IMR-90 (cell line): ENCODE measurements at regions of chr2 and their contacts with region 1.

Region 1: DNA sequence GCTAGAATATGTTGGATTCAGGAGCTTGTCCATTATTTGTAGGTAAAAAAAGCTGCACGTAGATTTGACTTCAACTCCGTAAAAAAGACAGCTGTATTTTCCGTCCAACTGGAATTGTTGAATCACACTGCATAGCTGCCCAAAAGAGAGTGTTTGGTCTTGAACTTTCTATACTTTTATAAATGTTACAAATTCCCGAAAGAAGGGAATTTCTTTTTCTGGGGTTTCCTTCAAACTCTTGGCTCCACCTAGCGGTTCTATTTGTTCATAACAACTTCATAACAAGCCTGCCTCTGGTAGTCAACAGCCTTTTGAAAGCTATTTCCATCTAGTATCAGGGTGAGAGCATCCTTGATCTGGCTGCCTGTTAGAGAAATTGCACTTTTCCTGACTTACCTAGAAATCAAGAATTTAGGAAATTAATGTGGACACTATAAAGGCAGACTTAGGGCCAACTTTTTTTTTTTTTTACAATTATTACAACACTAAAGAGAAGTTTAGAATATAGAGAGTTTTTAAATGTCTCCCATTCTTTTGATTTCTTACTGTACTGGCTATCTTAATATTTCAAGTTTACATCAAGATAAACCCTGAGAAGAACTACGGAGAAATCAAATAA is 48.1 kb downstream of the TMEM185B start:
- DNase-seq: peak; percentile 79
- ATAC-seq: peak; percentile 87
- H3K4me3 ChIP-seq: no peak overlapping the region
- H3K27ac ChIP-seq: no peak overlapping the region
- H3K4me1 ChIP-seq: peaks cover 3% of the 10 kb centered on the region
- H3K27me3 ChIP-seq: no peaks in the 10 kb centered on the region
- CTCF ChIP-seq: peak; percentile 86
- POLR2A ChIP-seq: 0 out of 2 replicates have a peak, but pooled peaks have one; percentile 22
- RAD21 ChIP-seq: peak; percentile 91

Region 2: DNA sequence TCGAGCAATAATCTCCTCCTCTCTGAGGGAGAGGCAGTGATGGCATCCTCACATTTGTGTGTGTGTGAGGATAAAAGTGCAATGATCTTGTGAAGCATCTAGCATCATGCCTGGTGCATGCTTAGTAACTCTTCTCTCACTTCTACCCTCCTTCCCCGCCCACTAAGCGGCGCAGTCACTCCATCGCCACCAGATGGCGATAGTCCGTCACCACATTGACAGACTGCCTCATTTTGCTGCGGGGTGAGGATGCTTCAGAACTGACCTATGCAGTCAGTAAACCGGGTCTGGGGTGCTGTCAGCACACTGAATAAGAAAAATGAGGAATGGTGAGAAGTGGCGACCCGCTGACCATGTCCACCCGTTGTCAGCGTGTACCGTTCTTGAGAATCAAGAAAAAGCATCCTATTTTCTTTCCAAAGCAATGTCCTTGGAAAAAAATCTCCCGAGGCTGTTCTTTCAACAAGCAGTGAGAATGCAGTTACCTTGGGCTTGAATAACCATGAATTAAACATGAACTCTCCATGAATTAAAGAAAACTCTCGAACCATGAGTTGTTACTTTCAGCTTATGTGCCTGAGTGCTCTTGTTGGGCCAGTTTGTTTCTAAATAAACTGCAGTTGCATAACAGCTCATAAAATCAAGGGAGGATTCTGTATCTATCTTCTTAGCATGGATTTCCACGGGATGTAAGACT is 533.4 kb before region 1 on chr2:
- CTCF ChIA-PET with region 1: no interaction called
- POLR2A ChIA-PET with region 1: no interaction called
- dilution Hi-C with region 1: no loop called
- in situ Hi-C with region 1: no loop called
- intact Hi-C with region 1: loop called (anchors 1 kb)
- DNase-seq: peak; percentile 71
- ATAC-seq: peak; percentile 96
- H3K4me3 ChIP-seq: no peak overlapping the region
- H3K27ac ChIP-seq: no peak overlapping the region
- H3K4me1 ChIP-seq: no peaks in the 10 kb centered on the region
- H3K27me3 ChIP-seq: peaks cover 21% of the 10 kb centered on the region
- CTCF ChIP-seq: peak; percentile 94
- POLR2A ChIP-seq: no peak
- RAD21 ChIP-seq: peak; percentile 86

Region 3: GRCh38 chr2:119753041-119753929 is 421.8 kb before region 1 on chr2:
- CTCF ChIA-PET with region 1: interaction called, 6 read pairs
- POLR2A ChIA-PET with region 1: no interaction called
- dilution Hi-C with region 1: no loop called
- in situ Hi-C with region 1: loop called (anchors 5 kb)
- intact Hi-C with region 1: loop called (anchors 1 kb)
- DNase-seq: peak; percentile 56
- ATAC-seq: peak; percentile 81
- H3K4me3 ChIP-seq: no peak overlapping the region
- H3K27ac ChIP-seq: no peak overlapping the region
- H3K4me1 ChIP-seq: peaks cover 1% of the 10 kb centered on the region; the same call in 1 of the 2 replicates
- H3K27me3 ChIP-seq: peaks cover 2% of the 10 kb centered on the region; the same call in 1 of the 2 replicates
- CTCF ChIP-seq: peak; percentile 78
- POLR2A ChIP-seq: no peak
- RAD21 ChIP-seq: peak; percentile 78

Region 4: GRCh38 chr2:120012771-120013596 is 162.1 kb before region 1 on chr2 and contains the start of gene EPB41L5:
- CTCF ChIA-PET with region 1: interaction called, 4 read pairs
- POLR2A ChIA-PET with region 1: no interaction called
- dilution Hi-C with region 1: no loop called
- in situ Hi-C with region 1: no loop called
- intact Hi-C with region 1: loop called (anchors 2 kb)
- DNase-seq: peak; percentile 93
- ATAC-seq: peak; percentile 97
- H3K4me3 ChIP-seq: peak within 1 kb of the TSS; percentile 93
- H3K27ac ChIP-seq: peak within 1 kb of the TSS; percentile 18; the same call in 1 of the 2 replicates
- H3K4me1 ChIP-seq: peaks cover 4% of the 10 kb centered on the region; the same call in 1 of the 2 replicates
- H3K27me3 ChIP-seq: no peaks in the 10 kb centered on the region
- CTCF ChIP-seq: 0 out of 2 replicates have a peak, but pooled peaks have one; percentile 6
- POLR2A ChIP-seq: peak; percentile 70
- RAD21 ChIP-seq: 0 out of 2 replicates have a peak, but pooled peaks have one; percentile 13
- total RNA-seq, gene EPB41L5: 10.6 and 11.4 TPM in 2 replicates

Region 5: DNA sequence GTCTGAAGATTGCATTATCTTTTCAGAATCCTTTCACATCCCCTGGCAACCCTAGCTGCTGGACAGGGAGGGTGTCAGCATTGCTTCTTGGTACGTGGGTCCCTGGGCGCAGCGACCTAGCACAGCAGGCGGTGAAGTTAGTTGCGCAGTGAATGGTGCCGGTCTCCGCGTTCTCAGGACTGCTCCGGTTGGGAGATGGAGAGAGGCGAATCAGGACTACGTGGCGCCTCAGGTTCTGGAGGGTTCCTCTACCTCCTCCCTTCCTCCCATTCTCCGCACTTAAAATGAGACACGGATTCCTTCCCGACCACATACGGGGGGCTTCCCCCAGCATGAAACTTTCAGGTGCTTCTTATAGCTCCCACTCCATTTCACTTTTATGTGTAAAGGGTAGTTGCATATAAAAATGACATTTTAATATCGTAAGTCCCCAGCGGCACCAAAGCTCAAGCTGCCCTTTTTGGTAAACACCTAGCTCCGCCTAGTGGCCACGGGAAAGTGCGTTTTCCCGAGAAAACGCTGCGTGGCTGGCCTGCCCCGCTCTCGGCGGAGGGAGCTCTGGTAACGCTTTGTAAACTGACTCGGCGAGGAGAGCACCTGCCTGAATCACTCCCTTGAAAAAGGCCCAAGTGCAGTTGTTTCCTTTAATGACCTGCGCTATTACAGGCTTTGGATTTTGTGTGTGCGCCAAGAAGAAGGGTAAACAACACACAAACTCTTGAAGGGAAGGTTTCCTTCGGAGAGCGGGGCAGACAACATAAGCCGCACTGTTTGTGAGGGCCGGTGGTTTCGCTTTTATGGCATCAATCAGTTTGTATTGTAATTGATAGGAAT is 138.0 kb after region 1 on chr2:
- CTCF ChIA-PET with region 1: interaction called, 4 read pairs
- POLR2A ChIA-PET with region 1: no interaction called
- dilution Hi-C with region 1: no loop called
- in situ Hi-C with region 1: no loop called
- intact Hi-C with region 1: loop called (anchors 1 kb)
- DNase-seq: peak; percentile 82
- ATAC-seq: peak; percentile 93
- H3K4me3 ChIP-seq: peak overlapping the region; percentile 44
- H3K27ac ChIP-seq: no peak overlapping the region
- H3K4me1 ChIP-seq: no peaks in the 10 kb centered on the region; the same call in 1 of the 2 replicates
- H3K27me3 ChIP-seq: peaks cover 10% of the 10 kb centered on the region
- CTCF ChIP-seq: peak; percentile 92
- POLR2A ChIP-seq: no peak; the same call in 1 of the 2 replicates
- RAD21 ChIP-seq: peak; percentile 86

Region 6: DNA sequence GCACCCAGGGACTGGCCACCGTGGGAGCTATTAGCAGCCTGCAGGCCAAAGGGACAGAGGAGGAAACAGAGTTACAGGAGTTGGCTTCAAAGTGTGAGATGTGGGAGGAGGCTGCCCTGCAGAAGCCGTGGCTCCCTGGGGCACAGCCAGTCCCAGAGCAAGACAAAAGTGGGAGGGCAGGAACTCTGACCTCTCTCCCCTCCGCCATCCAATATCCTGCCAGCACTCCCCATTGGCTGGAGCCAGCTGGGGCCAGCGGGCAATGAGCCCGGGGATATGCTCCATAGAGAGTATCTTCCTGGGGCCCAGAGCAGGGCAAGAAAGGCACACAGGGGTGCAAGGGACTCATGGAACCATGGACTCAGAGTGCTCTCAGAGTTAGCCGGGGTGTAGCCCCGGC is 314.0 kb after region 1 on chr2:
- CTCF ChIA-PET with region 1: no interaction called
- POLR2A ChIA-PET with region 1: no interaction called
- dilution Hi-C with region 1: no loop called
- in situ Hi-C with region 1: no loop called
- intact Hi-C with region 1: no loop called
- DNase-seq: no peak
- ATAC-seq: no peak
- H3K4me3 ChIP-seq: no peak overlapping the region
- H3K27ac ChIP-seq: no peak overlapping the region
- H3K4me1 ChIP-seq: no peaks in the 10 kb centered on the region
- H3K27me3 ChIP-seq: peaks cover 51% of the 10 kb centered on the region
- CTCF ChIP-seq: no peak
- POLR2A ChIP-seq: no peak
- RAD21 ChIP-seq: no peak